Heart left ventricle (tissue), 16 donors: ENCODE measurements at regions of chr6 and their contacts with region 1.

Region 1: DNA sequence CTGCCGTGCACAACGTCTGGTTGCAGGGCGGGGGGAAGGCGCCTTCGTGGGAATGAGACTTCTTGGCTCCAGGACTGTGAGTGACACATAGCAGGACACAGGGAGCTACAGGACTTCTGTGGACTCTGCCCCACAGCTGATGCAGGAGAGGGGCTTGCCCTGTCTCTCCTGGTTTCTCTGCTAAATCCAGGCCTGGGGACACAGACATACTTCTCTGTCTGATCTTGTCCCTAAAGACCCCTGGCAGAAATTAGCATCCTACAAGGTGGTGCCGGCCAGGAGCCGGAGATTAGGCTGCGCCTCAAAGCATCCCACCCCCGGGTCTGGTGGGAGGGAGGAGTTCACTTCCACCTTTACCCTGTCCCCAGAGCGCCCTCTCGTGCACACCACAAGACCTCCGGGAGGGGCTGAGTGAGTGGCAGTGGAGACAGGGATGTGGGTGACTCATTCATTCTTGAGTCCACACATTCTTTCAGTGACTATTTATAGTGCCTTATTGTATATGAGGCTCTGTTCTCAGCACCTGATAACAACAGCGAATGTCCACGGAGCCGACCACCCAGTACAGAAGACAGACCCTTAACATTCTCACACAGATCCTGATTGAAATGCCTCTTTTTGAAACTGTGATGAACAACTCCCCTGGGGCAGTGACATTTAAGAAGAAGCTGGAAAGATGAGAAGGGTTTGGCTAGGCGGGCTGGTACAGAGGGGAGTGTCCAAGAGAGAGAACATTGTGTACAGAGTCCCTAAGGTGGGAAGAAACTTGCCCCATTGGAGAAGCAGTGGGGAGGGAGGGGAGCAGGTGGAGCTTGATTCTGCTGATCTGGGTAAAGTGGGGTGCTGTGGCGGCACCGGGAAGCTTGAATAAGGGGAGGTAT is 39.0 kb downstream of the GMPR start:
- DNase-seq: peak; percentile 74 to 92 (median 81)
- ATAC-seq: peak; percentile 88 to 94 (median 92)
- H3K4me3 ChIP-seq: peak overlapping the region in 1 of 12 donors; percentile 30
- H3K27ac ChIP-seq: peak overlapping the region; percentile 52 to 93 (median 80)
- H3K4me1 ChIP-seq: peaks cover 0 to 32% (median 9%) of the 10 kb centered on the region in 12 donors
- H3K27me3 ChIP-seq: no peaks in the 10 kb centered on the region
- CTCF ChIP-seq: peak in 9 of 12 donors; percentile 43 to 64 (median 52)
- POLR2A ChIP-seq: no peak

Region 2: GRCh38 chr6:16228709-16229665 is 48.4 kb before region 1 on chr6:
- intact Hi-C with region 1: loop called in 3 of 10 experiments (anchors 5 to 10 kb)
- DNase-seq: no peak
- ATAC-seq: peak in 3 of 4 donors; percentile 44 to 72 (median 72)
- H3K4me3 ChIP-seq: peak overlapping the region in 8 of 12 donors; percentile 4 to 34 (median 11)
- H3K27ac ChIP-seq: no peak overlapping the region
- H3K4me1 ChIP-seq: peaks cover 0 to 16% (median 11%) of the 10 kb centered on the region in 12 donors
- H3K27me3 ChIP-seq: peaks cover 0 to 12% (median 0%) of the 10 kb centered on the region in 9 donors
- CTCF ChIP-seq: peak in 8 of 12 donors; percentile 17 to 49 (median 28)
- POLR2A ChIP-seq: no peak

Region 3: DNA sequence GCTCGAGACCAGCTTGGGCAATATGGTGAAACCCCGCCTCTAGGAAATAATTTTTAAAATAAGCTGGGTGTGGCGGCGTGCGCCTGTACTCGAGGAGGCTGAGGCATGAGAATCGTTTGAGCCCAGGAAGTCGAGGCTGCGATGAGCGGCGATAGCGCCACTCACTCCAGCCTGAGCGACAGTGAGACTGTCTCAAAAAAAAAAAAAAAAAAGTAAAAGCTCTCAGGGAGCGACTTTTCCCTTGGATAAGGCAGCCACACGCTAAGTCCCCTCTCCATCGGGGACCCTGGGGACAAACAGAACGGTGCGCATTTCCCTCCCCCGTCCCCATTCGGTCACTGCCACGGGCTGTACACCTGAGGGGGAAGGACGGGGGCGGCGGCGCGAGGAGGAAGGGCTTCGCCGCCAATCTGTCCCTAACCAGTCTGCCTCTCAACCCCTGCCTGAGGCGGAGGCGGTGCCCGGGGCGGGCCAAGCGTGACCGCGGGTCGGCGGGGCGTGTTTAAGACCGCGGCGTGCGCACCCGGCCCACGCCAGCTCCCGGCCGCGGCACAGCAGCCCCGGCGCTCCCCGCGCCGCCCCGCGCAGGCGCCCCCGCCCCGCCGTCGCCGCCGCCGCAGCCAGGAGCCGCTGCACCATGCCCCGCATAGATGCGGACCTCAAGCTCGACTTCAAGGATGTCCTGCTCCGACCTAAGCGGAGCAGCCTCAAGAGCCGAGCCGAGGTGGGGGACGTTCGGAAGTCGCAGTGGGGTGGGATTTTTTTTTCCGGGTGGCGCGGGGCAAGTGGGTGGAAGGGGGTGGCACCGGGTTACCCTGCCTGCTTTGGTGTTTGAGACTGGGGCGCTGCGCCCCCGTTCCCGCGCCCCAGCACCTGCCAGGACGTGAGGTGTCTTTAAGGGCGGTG is 39.0 kb before region 1 on chr6 and contains the start of gene GMPR:
- intact Hi-C with region 1: loop called in 7 of 10 experiments (anchors 1 to 5 kb)
- DNase-seq: peak; percentile 82 to 91 (median 88)
- ATAC-seq: peak; percentile 53 to 84 (median 80)
- H3K4me3 ChIP-seq: peak within 1 kb of the TSS; percentile 50 to 88 (median 76)
- H3K27ac ChIP-seq: peak within 1 kb of the TSS; percentile 59 to 92 (median 86)
- H3K4me1 ChIP-seq: peaks cover 0 to 62% (median 28%) of the 10 kb centered on the region in 12 donors
- H3K27me3 ChIP-seq: no peaks in the 10 kb centered on the region
- CTCF ChIP-seq: peak in 4 of 12 donors; percentile 12 to 27 (median 20)
- POLR2A ChIP-seq: peak in 1 of 2 donors; percentile 58
- total RNA-seq, gene GMPR: 67.8 to 160 (median 115) TPM

Region 4: GRCh38 chr6:16244869-16245451 is 32.4 kb before region 1 on chr6:
- intact Hi-C with region 1: loop called in 2 of 10 experiments (anchors 2 to 5 kb)
- DNase-seq: no peak
- ATAC-seq: peak; percentile 60 to 71 (median 68)
- H3K4me3 ChIP-seq: no peak overlapping the region
- H3K27ac ChIP-seq: peak overlapping the region; percentile 52 to 92 (median 86)
- H3K4me1 ChIP-seq: peaks cover under 1 to 68% (median 35%) of the 10 kb centered on the region in 12 donors
- H3K27me3 ChIP-seq: no peaks in the 10 kb centered on the region
- CTCF ChIP-seq: no peak
- POLR2A ChIP-seq: no peak